ENCODE measurements at regions of chr1 and their contacts with region 1.

Region 1: DNA sequence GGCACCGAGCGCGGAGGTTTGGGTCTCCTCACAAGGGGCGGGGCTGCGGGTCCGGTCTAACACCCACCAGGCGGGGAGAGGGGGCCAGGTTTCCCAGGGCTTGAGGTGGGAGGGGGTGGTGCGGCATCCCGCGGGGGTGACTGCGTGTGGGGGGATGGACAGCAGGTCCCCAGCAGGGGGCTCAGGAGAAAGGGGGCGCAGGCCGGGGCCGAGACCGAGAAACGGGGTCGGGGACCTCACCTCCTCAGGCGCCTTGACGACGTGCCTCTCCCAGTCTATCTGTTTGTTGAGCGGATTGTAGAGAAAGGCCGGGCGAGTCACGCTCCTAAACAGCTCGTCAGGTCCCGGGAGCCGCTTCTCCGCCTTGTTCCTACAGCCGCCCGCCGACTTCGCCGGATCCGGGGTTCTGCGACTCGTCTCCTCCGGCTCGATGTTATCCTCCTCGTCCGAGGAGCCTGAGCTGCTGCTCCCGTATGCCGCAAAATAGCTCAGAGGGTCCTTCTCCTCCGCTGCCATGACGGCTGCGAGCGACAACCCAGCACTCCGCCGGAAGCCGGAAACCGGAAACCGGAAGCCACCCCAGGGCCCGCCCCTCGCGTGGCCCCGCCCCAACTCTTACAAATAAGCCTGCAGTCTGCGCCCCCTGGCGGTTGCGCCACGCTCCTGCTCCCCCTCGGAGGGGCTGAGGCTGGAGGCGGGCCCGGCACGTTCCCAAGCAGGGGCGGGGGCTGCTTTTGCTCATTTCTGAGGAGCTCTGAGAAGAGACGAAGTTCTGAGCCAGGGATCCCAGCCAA is at the start of gene C1orf52:
- DNase-seq: peak; percentile 97
- H3K4me3 Mint-ChIP-seq: peak within 1 kb of the TSS; percentile 97
- H3K27ac Mint-ChIP-seq: peak within 1 kb of the TSS; percentile 92
- H3K4me1 Mint-ChIP-seq: peaks cover 33% of the 10 kb centered on the region
- H3K27me3 Mint-ChIP-seq: no peaks in the 10 kb centered on the region
- total RNA-seq, gene C1orf52: 19.4 to 21.8 TPM

Region 2: GRCh38 chr1:84478876-84479868 is 780.1 kb before region 1 on chr1 and contains the start of gene RPF1:
- CTCF ChIA-PET with region 1: interaction called, 3 read pairs
- POLR2A ChIA-PET with region 1: no interaction called
- intact Hi-C with region 1: loop called (anchors 2 kb)
- DNase-seq: peak; percentile 82
- H3K4me3 Mint-ChIP-seq: peak within 1 kb of the TSS; percentile 96
- H3K27ac Mint-ChIP-seq: peak within 1 kb of the TSS; percentile 96
- H3K4me1 Mint-ChIP-seq: peaks cover 34% of the 10 kb centered on the region
- H3K27me3 Mint-ChIP-seq: peaks cover 16% of the 10 kb centered on the region
- total RNA-seq, gene RPF1: 55.0 to 56.5 TPM

Region 3: GRCh38 chr1:84862810-84863251 is 396.5 kb before region 1 on chr1:
- CTCF ChIA-PET with region 1: no interaction called
- POLR2A ChIA-PET with region 1: no interaction called
- intact Hi-C with region 1: loop called (anchors 5 kb)
- DNase-seq: peak; percentile 65
- H3K4me3 Mint-ChIP-seq: peak overlapping the region; percentile 7
- H3K27ac Mint-ChIP-seq: peak overlapping the region; percentile 43
- H3K4me1 Mint-ChIP-seq: peaks cover 28% of the 10 kb centered on the region
- H3K27me3 Mint-ChIP-seq: no peaks in the 10 kb centered on the region

Region 4: DNA sequence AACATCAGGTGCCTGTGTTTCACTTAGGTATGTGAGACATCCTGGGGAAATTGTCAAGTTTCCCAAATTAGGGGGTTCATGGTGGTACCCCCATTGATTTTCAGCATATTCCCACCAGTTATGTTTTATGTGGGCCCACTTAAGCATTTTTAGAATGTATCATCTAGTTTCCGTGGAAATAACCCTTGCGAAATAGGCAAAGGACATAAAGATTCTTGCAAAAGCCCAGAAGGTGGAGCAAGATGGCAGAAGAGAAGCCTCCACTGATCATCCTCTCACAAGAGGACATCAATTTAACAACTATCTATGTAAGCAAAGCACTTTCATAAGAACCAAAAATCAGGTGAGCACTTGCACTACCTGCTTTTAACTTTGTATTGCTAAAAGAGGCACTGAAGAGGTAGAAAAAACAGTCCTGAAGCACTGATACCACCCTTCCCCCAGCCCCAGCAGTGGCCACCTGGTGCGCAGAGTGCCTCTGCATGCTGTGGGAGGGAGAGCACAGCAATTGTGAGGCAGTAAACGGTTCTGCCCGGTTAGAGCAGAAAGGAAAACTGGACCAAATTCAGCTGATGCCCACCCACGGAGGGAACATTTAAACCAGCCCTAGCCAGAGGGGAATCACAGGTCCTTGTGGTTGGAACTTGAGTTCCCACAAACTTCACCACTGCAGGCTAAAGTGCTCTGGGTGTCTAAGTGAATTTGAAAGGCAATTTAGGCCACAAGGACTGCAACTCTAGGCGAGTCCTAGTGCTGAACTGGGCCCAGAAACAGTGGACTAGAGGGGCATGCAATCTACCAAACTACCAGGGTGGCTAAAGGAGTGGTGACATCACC is 285.6 kb before region 1 on chr1:
- CTCF ChIA-PET with region 1: interaction called, 11 read pairs
- POLR2A ChIA-PET with region 1: no interaction called
- intact Hi-C with region 1: no loop called
- DNase-seq: peak; percentile 37
- H3K4me3 Mint-ChIP-seq: no peak overlapping the region
- H3K27ac Mint-ChIP-seq: peak overlapping the region; percentile 55
- H3K4me1 Mint-ChIP-seq: peaks cover 76% of the 10 kb centered on the region
- H3K27me3 Mint-ChIP-seq: no peaks in the 10 kb centered on the region

Region 5: DNA sequence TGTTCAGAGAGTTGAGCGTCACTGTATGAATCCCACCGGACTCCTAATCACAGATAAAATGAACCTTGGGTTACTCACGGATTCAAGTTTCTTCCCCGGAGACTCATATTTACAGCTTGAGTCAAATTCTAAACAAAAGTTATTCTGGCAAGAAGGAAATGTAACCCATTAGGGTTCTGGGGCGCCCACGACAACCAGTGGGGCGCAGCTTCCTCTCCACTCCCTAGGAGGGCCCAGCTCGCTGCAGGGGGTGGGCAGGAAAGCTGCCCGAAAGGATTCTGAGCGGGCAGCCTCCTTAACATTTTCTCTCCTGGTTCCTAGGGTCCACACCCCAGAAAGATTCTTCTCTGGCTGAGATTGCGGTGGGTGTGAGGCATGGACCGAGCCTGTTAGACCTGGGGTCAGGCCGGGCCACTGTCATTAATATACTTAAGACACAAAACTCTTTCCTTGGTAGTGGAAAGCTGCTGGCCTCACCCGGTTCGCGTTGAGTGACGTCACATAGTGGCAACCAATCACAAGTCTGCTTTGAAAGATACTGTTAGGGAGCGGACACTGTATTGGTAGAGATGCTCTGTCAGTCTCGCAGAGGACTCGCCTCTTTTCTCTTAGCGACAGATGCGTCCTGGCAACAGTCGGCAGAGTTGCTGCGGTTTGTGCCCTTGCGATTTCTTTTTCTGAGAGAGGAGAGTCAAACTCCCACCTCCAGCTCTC is 197.4 kb before region 1 on chr1:
- CTCF ChIA-PET with region 1: interaction called, 5 read pairs
- POLR2A ChIA-PET with region 1: no interaction called
- intact Hi-C with region 1: loop called (anchors 1 kb)
- DNase-seq: peak; percentile 89
- H3K4me3 Mint-ChIP-seq: peak overlapping the region; percentile 77
- H3K27ac Mint-ChIP-seq: peak overlapping the region; percentile 31
- H3K4me1 Mint-ChIP-seq: peaks cover 12% of the 10 kb centered on the region
- H3K27me3 Mint-ChIP-seq: peaks cover 13% of the 10 kb centered on the region

Region 6: GRCh38 chr1:85200870-85201339 is 58.4 kb before region 1 on chr1 and contains the start of gene SYDE2:
- CTCF ChIA-PET with region 1: interaction called, 7 read pairs
- POLR2A ChIA-PET with region 1: interaction called, 3 read pairs
- intact Hi-C with region 1: loop called (anchors 1 kb)
- DNase-seq: peak; percentile 76
- H3K4me3 Mint-ChIP-seq: peak within 1 kb of the TSS; percentile 97
- H3K27ac Mint-ChIP-seq: peak within 1 kb of the TSS; percentile 89
- H3K4me1 Mint-ChIP-seq: peaks cover 26% of the 10 kb centered on the region
- H3K27me3 Mint-ChIP-seq: peaks cover 5% of the 10 kb centered on the region
- total RNA-seq, gene SYDE2: 2.7 to 2.8 TPM

Region 7: DNA sequence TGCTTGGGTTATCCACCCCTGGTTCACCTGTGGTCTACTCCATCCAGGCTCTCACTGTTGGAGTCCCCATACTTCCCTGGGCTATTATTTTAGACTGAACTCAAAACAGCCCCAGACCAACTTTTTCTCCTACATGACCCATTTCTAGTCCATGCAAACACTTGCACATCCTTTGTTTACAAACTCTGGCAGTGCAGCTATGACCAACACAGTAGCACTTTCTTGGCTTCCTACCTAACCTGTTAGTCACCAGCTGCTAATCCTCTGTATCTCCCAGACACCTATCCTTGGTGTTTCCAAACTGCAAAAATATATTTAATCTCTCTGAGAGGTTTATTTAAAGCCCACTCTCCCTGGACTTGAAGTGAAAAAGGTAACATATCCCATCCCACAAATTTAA is 114.8 kb after region 1 on chr1:
- CTCF ChIA-PET with region 1: no interaction called
- POLR2A ChIA-PET with region 1: no interaction called
- intact Hi-C with region 1: no loop called
- DNase-seq: no peak
- H3K4me3 Mint-ChIP-seq: no peak overlapping the region
- H3K27ac Mint-ChIP-seq: no peak overlapping the region
- H3K4me1 Mint-ChIP-seq: no peaks in the 10 kb centered on the region
- H3K27me3 Mint-ChIP-seq: no peaks in the 10 kb centered on the region